CD8-positive, alpha-beta T cell (primary cell): ENCODE measurements at regions of chr6 and their contacts with region 1.

Region 1: GRCh38 chr6:25070547-25071366 is 135.0 kb upstream of the RIPOR2 start:
- DNase-seq: peak; percentile 62 to 92 (median 81)
- ATAC-seq: peak; percentile 98
- H3K4me3 ChIP-seq: peak overlapping the region in 1 of 2 experiments; percentile 12
- H3K4me3 Mint-ChIP-seq: peak overlapping the region; percentile 73
- H3K27ac ChIP-seq: peak overlapping the region in 1 of 2 experiments; percentile 31
- H3K27ac Mint-ChIP-seq: peak overlapping the region; percentile 87
- H3K4me1 ChIP-seq: no peaks in the 10 kb centered on the region
- H3K4me1 Mint-ChIP-seq: peaks cover 9% of the 10 kb centered on the region
- H3K27me3 ChIP-seq: no peaks in the 10 kb centered on the region
- H3K27me3 Mint-ChIP-seq: no peaks in the 10 kb centered on the region
- CTCF ChIP-seq: peak; percentile 92

Region 2: DNA sequence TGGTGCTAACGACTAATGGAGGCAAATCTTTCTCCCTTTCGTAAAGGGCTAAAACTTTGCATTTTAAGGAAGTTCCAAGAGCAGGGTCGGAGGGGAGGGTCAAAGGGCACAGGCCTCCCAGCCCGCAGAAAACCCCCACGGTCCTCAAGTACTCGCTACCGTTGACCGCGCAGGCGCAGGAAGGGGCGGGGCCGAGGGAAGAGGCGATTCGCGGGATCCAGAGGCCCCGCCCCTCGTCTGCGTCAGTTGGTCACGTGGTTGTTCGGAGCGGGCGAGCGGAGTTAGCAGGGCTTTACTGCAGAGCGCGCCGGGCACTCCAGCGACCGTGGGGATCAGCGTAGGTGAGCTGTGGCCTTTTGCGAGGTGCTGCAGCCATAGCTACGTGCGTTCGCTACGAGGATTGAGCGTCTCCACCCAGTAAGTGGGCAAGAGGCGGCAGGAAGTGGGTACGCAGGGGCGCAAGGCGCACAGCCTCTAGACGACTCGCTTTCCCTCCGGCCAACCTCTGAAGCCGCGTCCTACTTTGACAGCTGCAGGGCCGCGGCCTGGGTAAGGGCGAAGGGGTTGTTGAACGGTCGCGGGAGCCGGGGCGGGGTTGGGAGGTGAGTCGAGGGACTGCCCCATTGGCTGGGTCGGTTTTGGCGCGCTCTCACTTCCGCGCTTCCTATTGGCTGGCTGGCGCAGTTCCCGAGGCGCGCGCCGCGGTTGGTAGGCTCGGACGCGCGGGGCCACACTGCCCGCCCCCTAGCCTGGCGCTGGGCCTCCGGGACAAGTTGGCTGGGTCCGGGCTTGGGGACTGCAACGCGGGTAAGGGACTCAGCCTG is 295.8 kb before region 1 on chr6 and contains the start of gene GMNN:
- CTCF ChIA-PET with region 1: no interaction called
- POLR2A ChIA-PET with region 1: no interaction called
- intact Hi-C with region 1: loop called in 1 of 2 experiments (anchors 2 kb)
- DNase-seq: peak; percentile 93 to 99 (median 98)
- ATAC-seq: peak; percentile 86
- H3K4me3 ChIP-seq: peak within 1 kb of the TSS; percentile 86 to 94
- H3K4me3 Mint-ChIP-seq: peak within 1 kb of the TSS; percentile 99
- H3K27ac ChIP-seq: peak within 1 kb of the TSS; percentile 83 to 85
- H3K27ac Mint-ChIP-seq: peak within 1 kb of the TSS; percentile 97
- H3K4me1 ChIP-seq: peaks cover 14% of the 10 kb centered on the region
- H3K4me1 Mint-ChIP-seq: peaks cover 22% of the 10 kb centered on the region
- H3K27me3 ChIP-seq: no peaks in the 10 kb centered on the region
- H3K27me3 Mint-ChIP-seq: no peaks in the 10 kb centered on the region
- CTCF ChIP-seq: no peak
- total RNA-seq, gene GMNN: 14.1 to 14.4 TPM

Region 3: DNA sequence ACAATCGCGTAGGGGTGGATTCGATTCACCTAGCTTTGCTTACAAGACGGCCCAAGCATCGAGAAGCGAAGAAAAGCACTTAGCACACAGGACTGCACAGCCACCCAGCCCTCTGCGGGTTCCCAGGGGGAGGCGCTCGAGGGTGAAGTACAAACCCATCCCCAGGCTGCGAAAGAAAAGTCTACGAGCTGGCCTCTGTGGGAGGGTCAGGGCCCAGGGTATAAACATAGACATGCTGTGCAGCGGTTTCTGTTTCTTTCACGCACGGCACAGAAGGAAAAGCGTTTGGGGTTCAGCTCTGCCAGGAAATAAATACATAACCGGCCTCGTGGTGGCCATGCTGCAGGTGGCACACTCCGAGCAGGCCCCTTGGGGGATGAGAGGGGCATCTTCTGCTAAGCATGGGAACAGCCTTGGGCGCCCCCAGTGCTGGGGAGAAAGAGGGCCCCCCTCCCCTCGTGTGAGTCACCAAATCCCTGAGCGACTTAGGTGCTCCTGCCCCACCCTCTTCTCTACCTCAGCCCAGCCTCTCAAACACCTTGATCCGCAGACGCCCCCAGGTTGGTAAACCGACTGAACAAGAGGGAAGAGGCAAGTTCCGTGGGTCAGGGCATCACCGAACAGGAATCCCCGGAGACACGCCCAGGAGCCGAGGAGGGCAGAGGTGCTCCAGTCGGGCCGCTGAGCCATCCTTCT is 43.4 kb before region 1 on chr6:
- CTCF ChIA-PET with region 1: interaction called, 137 read pairs
- POLR2A ChIA-PET with region 1: interaction called, 15 read pairs
- intact Hi-C with region 1: loop called (anchors 1 kb)
- DNase-seq: peak; percentile 43 to 89 (median 72)
- ATAC-seq: peak; percentile 94
- H3K4me3 ChIP-seq: peak overlapping the region; percentile 37 to 43
- H3K4me3 Mint-ChIP-seq: peak overlapping the region; percentile 75
- H3K27ac ChIP-seq: peak overlapping the region in 1 of 2 experiments; percentile 63
- H3K27ac Mint-ChIP-seq: peak overlapping the region; percentile 90
- H3K4me1 ChIP-seq: peaks cover 31% of the 10 kb centered on the region
- H3K4me1 Mint-ChIP-seq: peaks cover 43% of the 10 kb centered on the region
- H3K27me3 ChIP-seq: no peaks in the 10 kb centered on the region
- H3K27me3 Mint-ChIP-seq: no peaks in the 10 kb centered on the region
- CTCF ChIP-seq: peak; percentile 60

Region 4: GRCh38 chr6:25053875-25054371 is 16.8 kb before region 1 on chr6:
- CTCF ChIA-PET with region 1: interaction called, 21 read pairs
- POLR2A ChIA-PET with region 1: interaction called, 3 read pairs
- intact Hi-C with region 1: loop called in 1 of 2 experiments (anchors 2 kb)
- DNase-seq: peak in 2 of 9 experiments; percentile 62 to 76
- ATAC-seq: no peak
- H3K4me3 ChIP-seq: no peak overlapping the region
- H3K4me3 Mint-ChIP-seq: no peak overlapping the region
- H3K27ac ChIP-seq: no peak overlapping the region
- H3K27ac Mint-ChIP-seq: peak overlapping the region; percentile 11
- H3K4me1 ChIP-seq: peaks cover 41% of the 10 kb centered on the region
- H3K4me1 Mint-ChIP-seq: peaks cover 72% of the 10 kb centered on the region
- H3K27me3 ChIP-seq: no peaks in the 10 kb centered on the region
- H3K27me3 Mint-ChIP-seq: no peaks in the 10 kb centered on the region
- CTCF ChIP-seq: no peak